Ovary (tissue), 10 donors: ENCODE measurements at regions of chr18 and their contacts with region 1.

Region 1: GRCh38 chr18:57561728-57562423 is 24.6 kb downstream of the FECH start:
- DNase-seq: no peak
- H3K4me3 ChIP-seq: no peak overlapping the region
- H3K27ac ChIP-seq: no peak overlapping the region
- H3K4me1 ChIP-seq: no peaks in the 10 kb centered on the region
- H3K27me3 ChIP-seq: no peaks in the 10 kb centered on the region
- CTCF ChIP-seq: peak; percentile 45 to 60 (median 55)
- EP300 ChIP-seq: no peak
- POLR2A ChIP-seq: no peak

Region 2: GRCh38 chr18:56748698-56749268 is 813.1 kb before region 1 on chr18:
- intact Hi-C with region 1: loop called in 2 of 4 experiments (anchors 10 kb)
- DNase-seq: no peak
- H3K4me3 ChIP-seq: no peak overlapping the region
- H3K27ac ChIP-seq: no peak overlapping the region
- H3K4me1 ChIP-seq: no peaks in the 10 kb centered on the region
- H3K27me3 ChIP-seq: no peaks in the 10 kb centered on the region
- CTCF ChIP-seq: peak in 1 of 3 donors; percentile 20
- EP300 ChIP-seq: no peak
- POLR2A ChIP-seq: no peak

Region 3: GRCh38 chr18:56756966-56757365 is 804.9 kb before region 1 on chr18:
- intact Hi-C with region 1: loop called in 1 of 4 experiments (anchors 10 kb)
- DNase-seq: no peak
- H3K4me3 ChIP-seq: no peak overlapping the region
- H3K27ac ChIP-seq: no peak overlapping the region
- H3K4me1 ChIP-seq: no peaks in the 10 kb centered on the region
- H3K27me3 ChIP-seq: no peaks in the 10 kb centered on the region
- CTCF ChIP-seq: no peak
- EP300 ChIP-seq: no peak
- POLR2A ChIP-seq: no peak

Region 4: DNA sequence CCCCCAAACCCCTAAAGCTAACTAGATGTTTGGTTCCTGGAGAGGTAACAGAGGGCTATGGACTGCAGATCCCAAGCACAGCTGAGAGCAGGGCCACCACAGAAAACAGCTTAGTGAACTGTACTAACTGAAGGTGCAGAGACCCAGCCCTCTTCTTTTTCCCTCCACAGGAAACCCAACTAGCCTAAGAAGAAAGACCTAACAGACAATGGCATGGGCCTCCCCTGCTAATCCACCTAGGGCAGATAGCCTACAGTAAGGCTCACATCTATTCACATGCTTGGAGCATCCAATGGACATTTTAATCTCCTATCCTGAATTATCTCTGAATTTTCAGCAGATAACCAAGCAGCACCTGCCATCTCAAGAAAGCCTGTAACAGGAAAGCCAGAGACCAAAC is 33.5 kb after region 1 on chr18:
- intact Hi-C with region 1: no loop called
- DNase-seq: no peak
- H3K4me3 ChIP-seq: no peak overlapping the region
- H3K27ac ChIP-seq: no peak overlapping the region
- H3K4me1 ChIP-seq: no peaks in the 10 kb centered on the region
- H3K27me3 ChIP-seq: no peaks in the 10 kb centered on the region
- CTCF ChIP-seq: no peak
- EP300 ChIP-seq: no peak
- POLR2A ChIP-seq: no peak